ENCODE measurements at regions of chr17 and their contacts with region 1.

Region 1: GRCh38 chr17:35312790-35313711 is 60.4 kb downstream of the SLFN11 start:
- DNase-seq: peak; percentile 67 to 97 (median 76)
- ATAC-seq: peak; percentile 90
- H3K4me3 ChIP-seq: peak overlapping the region; percentile 77
- H3K4me3 Mint-ChIP-seq: peak overlapping the region; percentile 89
- H3K27ac ChIP-seq: peak overlapping the region; percentile 69 to 70
- H3K27ac Mint-ChIP-seq: peak overlapping the region; percentile 96
- H3K4me1 ChIP-seq: peaks cover 30% of the 10 kb centered on the region
- H3K4me1 Mint-ChIP-seq: peaks cover 67% of the 10 kb centered on the region
- H3K27me3 ChIP-seq: no peaks in the 10 kb centered on the region
- H3K27me3 Mint-ChIP-seq: no peaks in the 10 kb centered on the region
- CTCF ChIP-seq: peak; percentile 78

Region 2: DNA sequence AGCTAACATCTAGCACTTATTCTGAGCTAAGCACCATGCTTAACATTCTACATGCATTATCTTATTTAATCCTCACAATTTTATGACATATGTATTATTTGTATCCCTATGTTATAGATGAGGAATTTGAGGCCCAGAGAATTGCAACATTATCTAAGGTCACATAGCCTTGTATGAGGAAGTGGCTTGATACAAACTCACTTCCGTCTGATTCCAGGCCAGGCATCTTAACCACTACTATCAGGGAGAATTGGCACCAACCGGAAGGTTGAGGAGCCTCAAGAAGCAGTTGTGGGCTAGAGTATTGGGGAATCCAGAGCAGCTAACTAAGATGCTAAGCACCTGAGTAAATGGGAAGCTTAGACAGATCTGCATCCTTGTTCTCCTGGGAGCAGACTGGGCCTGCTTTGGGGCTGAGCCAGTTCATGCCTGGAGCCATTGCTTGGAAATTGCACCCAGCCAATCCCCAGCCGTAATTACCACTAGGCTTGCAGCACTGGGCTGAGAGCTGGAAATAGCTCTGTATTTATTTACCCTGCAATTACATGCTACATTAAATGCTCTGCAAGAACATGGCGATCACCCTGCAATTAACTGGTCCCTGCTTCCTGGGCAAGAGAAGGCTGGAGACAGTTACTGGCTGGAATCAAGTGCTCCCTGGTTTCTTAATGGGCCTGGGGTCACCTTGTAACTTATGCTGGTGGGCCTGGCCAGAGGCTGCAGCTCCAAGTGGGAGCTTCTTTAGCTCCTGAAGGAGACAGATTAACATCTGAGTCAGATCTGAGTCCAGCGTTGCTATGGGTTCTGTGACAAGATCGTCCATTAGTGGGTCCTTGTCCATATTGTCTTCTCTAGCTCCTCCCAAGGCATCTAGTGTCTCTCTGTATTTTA is 1331.1 kb before region 1 on chr17:
- CTCF ChIA-PET with region 1: no interaction called
- POLR2A ChIA-PET with region 1: no interaction called
- intact Hi-C with region 1: no loop called
- DNase-seq: no peak
- ATAC-seq: no peak
- H3K4me3 ChIP-seq: no peak overlapping the region
- H3K4me3 Mint-ChIP-seq: no peak overlapping the region
- H3K27ac ChIP-seq: no peak overlapping the region
- H3K27ac Mint-ChIP-seq: no peak overlapping the region
- H3K4me1 ChIP-seq: no peaks in the 10 kb centered on the region
- H3K4me1 Mint-ChIP-seq: no peaks in the 10 kb centered on the region
- H3K27me3 ChIP-seq: no peaks in the 10 kb centered on the region
- H3K27me3 Mint-ChIP-seq: no peaks in the 10 kb centered on the region
- CTCF ChIP-seq: no peak

Region 3: DNA sequence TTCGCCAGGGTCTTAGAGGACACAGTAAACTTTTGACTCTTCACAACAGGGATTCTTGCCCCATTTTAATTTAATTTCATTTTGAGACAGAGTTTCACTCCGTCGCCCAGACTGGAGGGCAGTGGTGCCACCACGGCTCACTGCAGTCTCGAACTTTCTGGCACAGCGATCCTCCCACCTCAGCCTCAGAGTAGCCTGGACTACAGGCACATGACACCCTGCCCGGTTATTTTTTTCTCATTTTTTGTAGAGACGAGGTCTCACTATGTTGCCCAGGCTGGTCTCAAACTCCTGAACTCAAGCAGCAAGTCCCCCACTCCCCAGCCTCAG is 170.6 kb before region 1 on chr17:
- CTCF ChIA-PET with region 1: no interaction called
- POLR2A ChIA-PET with region 1: no interaction called
- intact Hi-C with region 1: no loop called
- DNase-seq: no peak
- ATAC-seq: no peak
- H3K4me3 ChIP-seq: peak overlapping the region; percentile 98
- H3K4me3 Mint-ChIP-seq: peak overlapping the region; percentile 90
- H3K27ac ChIP-seq: no peak overlapping the region
- H3K27ac Mint-ChIP-seq: peak overlapping the region; percentile 75
- H3K4me1 ChIP-seq: peaks cover 28% of the 10 kb centered on the region
- H3K4me1 Mint-ChIP-seq: peaks cover 17% of the 10 kb centered on the region
- H3K27me3 ChIP-seq: no peaks in the 10 kb centered on the region
- H3K27me3 Mint-ChIP-seq: no peaks in the 10 kb centered on the region
- CTCF ChIP-seq: peak; percentile 54

Region 4: DNA sequence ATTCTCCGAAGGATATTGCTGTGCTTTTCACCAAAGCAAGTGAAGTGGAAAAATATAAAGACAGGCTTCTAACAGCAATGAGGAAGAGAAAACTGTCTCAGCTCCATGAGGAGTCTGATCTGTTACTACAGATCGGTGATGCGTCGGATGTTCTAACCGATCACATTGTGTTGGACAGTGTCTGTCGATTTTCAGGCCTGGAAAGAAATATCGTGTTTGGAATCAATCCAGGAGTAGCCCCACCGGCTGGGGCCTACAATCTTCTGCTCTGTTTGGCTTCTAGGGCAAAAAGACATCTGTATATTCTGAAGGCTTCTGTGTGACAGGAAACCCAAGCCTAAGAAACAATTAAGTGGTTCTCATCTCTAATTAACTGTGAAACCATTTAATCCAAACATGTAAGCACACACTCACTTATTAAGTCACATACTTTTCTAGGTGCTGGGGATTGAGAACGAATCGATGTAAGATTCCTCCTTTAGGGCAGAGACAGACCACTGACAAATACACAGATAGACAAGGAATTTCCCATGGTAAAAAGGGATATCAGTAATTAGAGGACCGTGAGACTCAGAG is 47.4 kb before region 1 on chr17:
- CTCF ChIA-PET with region 1: interaction called, 5 read pairs
- POLR2A ChIA-PET with region 1: interaction called, 28 read pairs
- intact Hi-C with region 1: no loop called
- DNase-seq: no peak
- ATAC-seq: no peak
- H3K4me3 ChIP-seq: no peak overlapping the region
- H3K4me3 Mint-ChIP-seq: no peak overlapping the region
- H3K27ac ChIP-seq: peak overlapping the region in 1 of 2 donors; percentile 6
- H3K27ac Mint-ChIP-seq: peak overlapping the region; percentile 81
- H3K4me1 ChIP-seq: peaks cover 51% of the 10 kb centered on the region
- H3K4me1 Mint-ChIP-seq: peaks cover 77% of the 10 kb centered on the region
- H3K27me3 ChIP-seq: no peaks in the 10 kb centered on the region
- H3K27me3 Mint-ChIP-seq: no peaks in the 10 kb centered on the region
- CTCF ChIP-seq: no peak

Region 5: DNA sequence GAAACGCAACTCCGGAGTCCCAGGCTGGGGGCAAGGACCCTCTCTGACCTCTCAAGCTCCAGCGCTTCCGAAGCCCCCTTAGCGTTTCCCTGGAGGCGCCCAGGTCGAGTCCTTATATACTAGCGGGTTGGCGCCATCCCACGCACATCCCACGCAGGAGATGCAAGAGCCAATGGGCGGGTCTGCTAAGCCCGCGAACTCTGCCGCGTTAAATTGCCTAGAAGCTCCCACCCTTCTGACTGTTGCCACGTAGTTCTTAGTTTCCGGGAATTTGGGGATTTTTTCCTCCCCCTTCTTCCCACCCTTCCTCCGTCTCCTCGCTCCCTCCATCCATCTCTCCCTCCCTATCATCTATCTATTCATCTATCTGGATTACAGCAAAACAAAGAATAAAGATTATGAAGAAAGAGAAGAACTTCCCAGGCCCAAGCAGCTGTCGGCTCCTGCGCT is 60.5 kb after region 1 on chr17 and contains the start of gene SLFN11:
- CTCF ChIA-PET with region 1: interaction called, 3 read pairs
- POLR2A ChIA-PET with region 1: interaction called, 31 read pairs
- intact Hi-C with region 1: loop called (anchors 1 to 2 kb)
- DNase-seq: peak; percentile 50 to 94 (median 71)
- ATAC-seq: peak; percentile 88
- H3K4me3 ChIP-seq: peak within 1 kb of the TSS; percentile 84
- H3K4me3 Mint-ChIP-seq: peak within 1 kb of the TSS; percentile 96
- H3K27ac ChIP-seq: peak within 1 kb of the TSS; percentile 80 to 96
- H3K27ac Mint-ChIP-seq: peak within 1 kb of the TSS; percentile 95
- H3K4me1 ChIP-seq: peaks cover 16% of the 10 kb centered on the region
- H3K4me1 Mint-ChIP-seq: peaks cover 62% of the 10 kb centered on the region
- H3K27me3 ChIP-seq: no peaks in the 10 kb centered on the region
- H3K27me3 Mint-ChIP-seq: no peaks in the 10 kb centered on the region
- CTCF ChIP-seq: no peak
- total RNA-seq, gene SLFN11: 16.5 to 18.5 TPM

Region 6: DNA sequence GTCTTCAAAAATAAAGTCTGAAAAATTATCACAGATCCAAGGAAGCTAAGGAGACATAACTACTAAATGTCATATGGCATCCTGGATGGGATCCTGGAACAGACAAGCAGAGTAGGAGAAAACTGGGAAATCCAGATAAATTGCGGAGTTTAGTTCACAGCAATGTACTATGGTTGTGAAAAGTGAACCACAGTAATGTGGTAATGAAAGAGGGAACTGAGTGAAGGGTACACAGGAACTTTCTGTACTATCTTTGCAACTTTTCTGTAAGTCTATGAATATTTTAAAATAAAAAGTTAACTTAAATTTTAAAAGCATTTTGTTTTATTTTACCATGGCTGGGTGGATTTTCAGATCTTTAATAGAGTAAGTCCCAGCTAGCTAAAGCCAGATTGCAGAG is 208.1 kb after region 1 on chr17:
- CTCF ChIA-PET with region 1: interaction called, 10 read pairs
- POLR2A ChIA-PET with region 1: no interaction called
- intact Hi-C with region 1: no loop called
- DNase-seq: no peak
- ATAC-seq: no peak
- H3K4me3 ChIP-seq: no peak overlapping the region
- H3K4me3 Mint-ChIP-seq: no peak overlapping the region
- H3K27ac ChIP-seq: no peak overlapping the region
- H3K27ac Mint-ChIP-seq: peak overlapping the region; percentile 77
- H3K4me1 ChIP-seq: peaks cover 56% of the 10 kb centered on the region
- H3K4me1 Mint-ChIP-seq: peaks cover 100% of the 10 kb centered on the region
- H3K27me3 ChIP-seq: no peaks in the 10 kb centered on the region
- H3K27me3 Mint-ChIP-seq: no peaks in the 10 kb centered on the region
- CTCF ChIP-seq: no peak

Region 7: DNA sequence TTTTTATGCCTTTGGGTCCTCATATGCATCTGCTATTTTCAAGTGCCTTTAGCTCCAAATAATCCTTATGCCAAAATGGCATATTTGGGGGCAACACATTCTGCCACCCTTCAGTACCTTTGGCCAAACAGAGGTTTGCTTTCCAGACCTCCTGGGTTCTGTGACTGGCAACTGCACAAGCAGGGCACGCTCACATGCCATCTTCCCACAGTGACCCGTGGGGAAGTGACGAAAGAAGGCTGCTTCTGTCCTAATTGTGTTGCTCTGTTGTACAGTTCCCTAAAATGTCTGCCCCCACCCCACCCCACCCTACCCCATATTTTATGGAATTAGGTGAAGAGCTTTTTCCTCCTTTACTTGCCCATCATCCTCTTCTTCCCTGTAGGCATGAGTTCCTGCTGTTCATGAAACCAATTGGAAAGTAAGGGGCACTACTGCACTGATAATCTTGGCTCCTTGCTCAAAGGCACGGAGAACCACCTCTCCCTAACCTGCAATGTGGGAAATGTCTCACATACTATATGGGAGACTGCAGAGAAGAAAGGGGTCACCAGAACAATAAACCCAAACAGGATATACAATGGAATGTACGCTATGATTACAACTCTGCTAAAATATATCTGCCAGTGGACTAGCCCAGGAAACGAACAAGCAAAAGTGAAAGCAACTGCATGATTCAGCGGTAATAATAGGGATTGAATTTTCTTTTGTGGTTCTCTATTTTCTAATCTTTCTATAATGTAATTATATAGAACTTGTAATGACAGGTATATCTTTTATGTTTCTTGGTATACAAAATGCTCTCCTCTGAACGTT is 227.7 kb after region 1 on chr17:
- CTCF ChIA-PET with region 1: interaction called, 57 read pairs
- POLR2A ChIA-PET with region 1: interaction called, 84 read pairs
- intact Hi-C with region 1: loop called in 1 of 2 experiments (anchors 1 kb)
- DNase-seq: peak in 7 of 14 experiments; percentile 21 to 83 (median 59)
- ATAC-seq: peak; percentile 47
- H3K4me3 ChIP-seq: peak overlapping the region; percentile 56
- H3K4me3 Mint-ChIP-seq: peak overlapping the region; percentile 93
- H3K27ac ChIP-seq: peak overlapping the region; percentile 67 to 85
- H3K27ac Mint-ChIP-seq: peak overlapping the region; percentile 82
- H3K4me1 ChIP-seq: peaks cover 23% of the 10 kb centered on the region
- H3K4me1 Mint-ChIP-seq: peaks cover 60% of the 10 kb centered on the region
- H3K27me3 ChIP-seq: no peaks in the 10 kb centered on the region
- H3K27me3 Mint-ChIP-seq: no peaks in the 10 kb centered on the region
- CTCF ChIP-seq: no peak